Adrenal gland (tissue), 19 donors: ENCODE measurements at regions of chr15 and their contacts with region 1.

Region 1: GRCh38 chr15:45457641-45458433 is 64.7 kb downstream of the SLC30A4 start:
- DNase-seq: peak; percentile 69 to 92 (median 86)
- H3K4me3 ChIP-seq: peak overlapping the region in 3 of 4 donors; percentile 5 to 43 (median 15)
- H3K27ac ChIP-seq: peak overlapping the region in 4 of 5 donors; percentile 1 to 84 (median 60)
- H3K4me1 ChIP-seq: peaks cover 3 to 10% of the 10 kb centered on the region in 2 donors
- H3K27me3 ChIP-seq: no peaks in the 10 kb centered on the region
- CTCF ChIP-seq: peak; percentile 66 to 89 (median 80)
- POLR2A ChIP-seq: no peak

Region 2: GRCh38 chr15:45429974-45430792 is 27.7 kb before region 1 on chr15:
- intact Hi-C with region 1: loop called in 1 of 2 experiments (anchors 2 kb)
- DNase-seq: peak; percentile 43 to 80 (median 71)
- H3K4me3 ChIP-seq: peak overlapping the region in 1 of 4 donors; percentile 50
- H3K27ac ChIP-seq: no peak overlapping the region
- H3K4me1 ChIP-seq: peaks cover 0 to 7% of the 10 kb centered on the region in 2 donors
- H3K27me3 ChIP-seq: no peaks in the 10 kb centered on the region
- CTCF ChIP-seq: peak; percentile 81 to 99 (median 88)
- POLR2A ChIP-seq: no peak

Region 3: DNA sequence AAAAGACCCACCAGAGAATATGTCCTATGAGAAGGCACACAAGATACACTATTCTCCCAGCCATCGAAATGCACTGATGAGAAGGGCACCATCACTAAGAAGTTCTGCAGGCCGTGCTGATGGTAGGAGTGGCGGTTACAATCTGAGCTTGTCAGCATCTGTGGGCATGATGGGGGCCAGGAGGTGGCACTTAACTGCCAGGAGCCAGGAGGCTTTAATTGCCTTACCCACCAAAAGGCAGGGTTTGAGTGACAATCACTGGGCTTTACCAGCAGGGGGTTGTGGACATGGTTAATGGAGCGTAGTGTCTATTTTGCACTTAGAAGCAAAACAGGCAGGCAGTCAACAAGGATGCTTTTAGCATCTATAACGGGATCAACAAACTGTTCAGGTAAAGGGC is 161.0 kb after region 1 on chr15:
- intact Hi-C with region 1: loop called in 1 of 2 experiments (anchors 5 kb)
- DNase-seq: no peak
- H3K4me3 ChIP-seq: no peak overlapping the region
- H3K27ac ChIP-seq: no peak overlapping the region
- H3K4me1 ChIP-seq: no peaks in the 10 kb centered on the region
- H3K27me3 ChIP-seq: no peaks in the 10 kb centered on the region
- CTCF ChIP-seq: no peak
- POLR2A ChIP-seq: no peak